ENCODE measurements at regions of chr6 and their contacts with region 1.

Region 1: GRCh38 chr6:35253249-35253648 is 6.3 kb upstream of the ZNF76 start:
- DNase-seq: no peak
- H3K4me3 ChIP-seq: no peak overlapping the region
- H3K27ac ChIP-seq: no peak overlapping the region
- H3K4me1 ChIP-seq: peaks cover 2% of the 10 kb centered on the region
- H3K27me3 ChIP-seq: no peaks in the 10 kb centered on the region
- CTCF ChIP-seq: no peak

Region 2: DNA sequence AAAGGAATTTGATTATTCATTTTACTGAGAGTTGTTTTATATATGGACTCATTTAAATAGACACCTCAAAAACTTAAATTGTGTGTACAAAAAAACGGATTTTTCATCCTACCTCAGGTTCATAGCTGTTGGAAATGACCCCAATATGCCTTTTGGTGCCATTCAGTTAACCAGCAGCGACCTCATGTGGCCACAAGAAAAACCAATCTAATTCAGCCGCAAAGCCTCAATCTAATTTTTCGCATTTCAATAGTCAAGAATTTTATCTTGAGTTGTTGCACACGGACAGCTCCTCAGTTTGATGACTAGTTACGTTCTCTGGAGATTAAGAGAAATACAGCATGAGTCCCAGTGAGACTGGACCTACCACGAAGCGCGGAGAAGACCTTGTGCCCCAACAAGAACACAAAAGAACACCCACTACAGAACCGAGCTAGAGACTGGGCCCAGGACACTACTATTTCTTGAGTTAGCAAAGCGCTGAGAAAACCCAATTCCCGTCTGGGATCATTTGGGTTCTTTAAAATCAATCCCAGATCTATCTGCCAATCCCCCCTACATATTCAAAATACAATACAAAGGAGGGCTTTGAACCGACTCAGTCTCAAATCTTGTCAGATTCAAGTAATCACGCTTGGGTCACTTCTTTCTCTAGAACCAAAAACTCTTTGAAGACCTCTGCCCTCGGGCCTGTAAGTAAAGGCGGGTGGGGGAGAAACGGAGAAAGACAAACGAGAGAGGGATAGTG is 113.2 kb before region 1 on chr6:
- CTCF ChIA-PET with region 1: no interaction called
- dilution Hi-C with region 1: no loop called
- in situ Hi-C with region 1: no loop called
- intact Hi-C with region 1: no loop called
- DNase-seq: peak; percentile 36
- H3K4me3 ChIP-seq: no peak overlapping the region
- H3K27ac ChIP-seq: no peak overlapping the region
- H3K4me1 ChIP-seq: no peaks in the 10 kb centered on the region
- H3K27me3 ChIP-seq: no peaks in the 10 kb centered on the region
- CTCF ChIP-seq: peak; percentile 87 to 89

Region 3: GRCh38 chr6:35178932-35179832 is 74.1 kb before region 1 on chr6:
- CTCF ChIA-PET with region 1: no interaction called
- dilution Hi-C with region 1: loop called (anchors 5 kb)
- in situ Hi-C with region 1: no loop called
- intact Hi-C with region 1: no loop called
- DNase-seq: no peak
- H3K4me3 ChIP-seq: no peak overlapping the region
- H3K27ac ChIP-seq: no peak overlapping the region
- H3K4me1 ChIP-seq: peaks cover 17% of the 10 kb centered on the region
- H3K27me3 ChIP-seq: no peaks in the 10 kb centered on the region
- CTCF ChIP-seq: no peak

Measured in mammary epithelial cell (primary cell).